Panc1 (cell line): ENCODE measurements at regions of chr3 and their contacts with region 1.

Region 1: DNA sequence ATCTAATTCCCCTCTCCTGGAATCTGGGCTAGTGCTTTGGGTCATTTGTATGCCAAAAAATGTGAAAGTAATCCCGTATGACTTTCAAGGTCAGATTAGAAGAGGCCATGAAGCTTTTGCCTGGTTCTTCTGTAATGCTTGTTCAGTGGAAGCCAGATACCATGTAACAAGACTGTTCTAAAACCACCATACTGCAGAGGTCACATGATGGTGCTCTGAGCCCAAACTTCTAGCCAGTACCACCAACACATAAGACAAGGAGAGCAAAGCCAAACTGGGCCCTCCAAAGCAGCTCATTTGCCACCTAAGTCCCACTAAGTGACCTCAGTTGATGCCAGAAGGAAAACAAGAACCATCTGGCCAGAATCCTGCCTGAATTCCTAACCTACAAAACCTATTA is 64.3 kb upstream of the MELTF start:
- DNase-seq: no peak
- ATAC-seq: 0 out of 2 replicates have a peak, but pooled peaks have one; percentile 34
- H3K4me3 ChIP-seq: no peak overlapping the region
- H3K27ac ChIP-seq: no peak overlapping the region
- H3K4me1 ChIP-seq: no peaks in the 10 kb centered on the region
- H3K27me3 ChIP-seq: no peaks in the 10 kb centered on the region
- CTCF ChIP-seq: no peak

Region 2: DNA sequence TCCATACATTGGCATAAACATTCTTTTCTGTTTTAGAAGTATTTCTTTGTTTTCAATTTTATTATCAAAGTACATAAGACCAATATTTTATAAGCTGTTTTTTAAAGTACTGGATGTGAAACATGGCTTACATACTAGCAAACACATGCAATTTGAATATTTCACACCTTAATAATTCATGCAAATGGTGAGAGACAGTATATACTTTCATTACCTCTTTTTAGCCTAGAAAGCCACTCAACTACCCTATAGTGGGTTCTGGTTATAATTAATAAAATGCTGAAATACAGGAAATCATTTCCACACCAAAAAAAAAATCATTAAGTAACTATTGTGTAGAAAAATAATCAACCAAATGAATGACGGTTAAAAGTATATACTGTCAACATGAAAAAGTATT is 25.8 kb before region 1 on chr3:
- CTCF ChIA-PET with region 1: no interaction called
- POLR2A ChIA-PET with region 1: no interaction called
- in situ Hi-C with region 1: no loop called
- intact Hi-C with region 1: no loop called
- DNase-seq: no peak
- ATAC-seq: no peak
- H3K4me3 ChIP-seq: no peak overlapping the region
- H3K27ac ChIP-seq: no peak overlapping the region
- H3K4me1 ChIP-seq: no peaks in the 10 kb centered on the region
- H3K27me3 ChIP-seq: no peaks in the 10 kb centered on the region
- CTCF ChIP-seq: no peak

Region 3: DNA sequence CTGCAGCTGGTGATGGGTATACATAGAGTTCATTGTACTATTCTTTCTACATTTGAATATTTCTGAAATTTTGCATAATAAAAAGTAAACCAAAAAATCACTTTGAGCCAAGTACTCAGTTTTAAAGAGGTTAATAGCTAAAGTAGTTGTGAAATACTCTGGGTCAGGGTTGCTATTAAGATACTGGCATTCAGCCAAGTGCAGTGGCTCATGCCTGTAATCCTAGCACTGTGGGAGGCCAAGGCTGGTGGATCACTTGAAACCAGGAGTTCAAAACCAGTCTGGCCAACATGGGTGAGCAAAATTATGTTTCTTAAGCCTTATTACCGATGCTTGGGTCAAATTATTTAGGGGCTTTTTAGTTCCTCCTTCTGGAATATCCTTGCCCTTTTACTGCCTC is 57.7 kb after region 1 on chr3:
- CTCF ChIA-PET with region 1: interaction called, 10 read pairs
- POLR2A ChIA-PET with region 1: no interaction called
- in situ Hi-C with region 1: no loop called
- intact Hi-C with region 1: no loop called
- DNase-seq: no peak
- ATAC-seq: no peak
- H3K4me3 ChIP-seq: no peak overlapping the region
- H3K27ac ChIP-seq: no peak overlapping the region
- H3K4me1 ChIP-seq: no peaks in the 10 kb centered on the region
- H3K27me3 ChIP-seq: no peaks in the 10 kb centered on the region
- CTCF ChIP-seq: no peak